Tibial artery (tissue), 4 donors: ENCODE measurements at regions of chr19 and their contacts with region 1.

Region 1: DNA sequence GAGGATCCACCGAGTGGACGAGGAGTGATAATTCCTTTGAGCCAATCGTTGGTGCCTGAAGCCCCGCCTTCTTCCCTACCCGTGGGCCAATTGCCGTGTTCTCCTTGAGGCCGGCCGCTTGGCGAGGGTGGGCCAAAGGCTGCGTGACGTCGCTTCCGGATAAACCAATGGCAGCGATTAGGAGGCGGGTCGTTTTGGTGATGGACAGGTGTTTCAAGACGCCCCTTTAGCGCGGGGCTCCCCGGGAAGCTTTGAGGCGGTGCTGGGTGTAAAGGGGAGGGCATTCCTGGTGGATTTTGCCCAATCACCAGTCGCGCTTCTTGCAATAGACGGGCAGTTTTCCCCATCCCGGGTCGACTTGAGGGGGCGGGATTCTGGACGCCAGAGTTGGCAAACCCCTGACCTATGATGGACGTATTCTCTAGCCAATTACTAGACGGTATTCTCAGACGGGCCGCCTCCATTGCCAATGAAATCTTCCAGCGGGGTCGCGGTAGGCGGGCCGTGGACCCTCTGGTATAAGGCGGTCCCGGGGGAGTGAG is 310 bp upstream of the PRMT1 start:
- DNase-seq: peak; percentile 100
- H3K4me3 ChIP-seq: peak overlapping the region; percentile 91 to 100
- H3K27ac ChIP-seq: peak overlapping the region; percentile 97 to 99
- H3K4me1 ChIP-seq: peaks cover 6 to 55% (median 44%) of the 10 kb centered on the region in 4 donors
- H3K27me3 ChIP-seq: no peaks in the 10 kb centered on the region
- CTCF ChIP-seq: no peak

Region 2: GRCh38 chr19:49497047-49497788 is 179.5 kb before region 1 on chr19:
- intact Hi-C with region 1: loop called (anchors 10 kb)
- DNase-seq: peak in 1 of 2 donors; percentile 73
- H3K4me3 ChIP-seq: peak overlapping the region; percentile 80 to 87
- H3K27ac ChIP-seq: peak overlapping the region; percentile 89 to 92
- H3K4me1 ChIP-seq: peaks cover 0 to 47% (median 32%) of the 10 kb centered on the region in 4 donors
- H3K27me3 ChIP-seq: no peaks in the 10 kb centered on the region
- CTCF ChIP-seq: no peak

Region 3: DNA sequence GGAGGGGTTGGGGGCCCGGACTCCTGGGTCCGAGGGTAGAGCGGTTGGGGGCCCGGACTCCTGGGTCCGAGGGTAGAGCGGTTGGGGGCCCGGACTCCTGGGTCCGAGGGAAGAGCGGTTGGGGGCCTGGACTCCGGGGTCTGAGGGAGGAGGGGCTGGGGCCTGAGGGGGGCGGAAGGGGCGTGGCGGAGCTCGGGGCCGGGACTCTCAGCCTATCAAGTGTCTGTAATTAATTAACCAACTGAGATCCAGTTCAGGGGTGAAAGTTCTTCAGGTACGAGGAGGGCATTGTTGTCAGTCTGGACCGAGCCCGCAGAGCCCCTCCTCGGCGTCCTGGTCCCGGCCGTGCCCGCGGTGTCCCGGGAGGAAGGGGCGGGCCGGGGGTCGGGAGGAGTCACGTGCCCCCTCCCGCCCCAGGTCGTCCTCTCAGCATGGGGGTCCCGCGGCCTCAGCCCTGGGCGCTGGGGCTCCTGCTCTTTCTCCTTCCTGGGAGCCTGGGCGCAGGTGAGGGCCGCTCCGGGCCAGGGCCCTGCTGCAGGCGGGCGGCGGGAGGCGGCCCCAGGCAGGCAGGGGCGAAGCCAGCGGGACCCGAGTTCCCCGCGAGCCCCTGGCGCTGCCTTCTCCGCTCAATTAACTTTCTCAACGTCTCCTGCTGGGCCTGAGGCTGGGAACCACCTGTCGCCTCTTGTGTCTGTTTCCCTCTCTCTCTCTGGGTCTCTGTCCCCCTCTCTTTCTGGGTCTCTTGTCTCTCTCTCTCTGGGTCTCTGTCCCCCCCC is 163.6 kb before region 1 on chr19:
- intact Hi-C with region 1: loop called (anchors 5 kb)
- DNase-seq: no peak
- H3K4me3 ChIP-seq: peak overlapping the region; percentile 68 to 82
- H3K27ac ChIP-seq: peak overlapping the region; percentile 88 to 90
- H3K4me1 ChIP-seq: peaks cover 0 to 28% (median 19%) of the 10 kb centered on the region in 4 donors
- H3K27me3 ChIP-seq: no peaks in the 10 kb centered on the region
- CTCF ChIP-seq: no peak

Region 4: DNA sequence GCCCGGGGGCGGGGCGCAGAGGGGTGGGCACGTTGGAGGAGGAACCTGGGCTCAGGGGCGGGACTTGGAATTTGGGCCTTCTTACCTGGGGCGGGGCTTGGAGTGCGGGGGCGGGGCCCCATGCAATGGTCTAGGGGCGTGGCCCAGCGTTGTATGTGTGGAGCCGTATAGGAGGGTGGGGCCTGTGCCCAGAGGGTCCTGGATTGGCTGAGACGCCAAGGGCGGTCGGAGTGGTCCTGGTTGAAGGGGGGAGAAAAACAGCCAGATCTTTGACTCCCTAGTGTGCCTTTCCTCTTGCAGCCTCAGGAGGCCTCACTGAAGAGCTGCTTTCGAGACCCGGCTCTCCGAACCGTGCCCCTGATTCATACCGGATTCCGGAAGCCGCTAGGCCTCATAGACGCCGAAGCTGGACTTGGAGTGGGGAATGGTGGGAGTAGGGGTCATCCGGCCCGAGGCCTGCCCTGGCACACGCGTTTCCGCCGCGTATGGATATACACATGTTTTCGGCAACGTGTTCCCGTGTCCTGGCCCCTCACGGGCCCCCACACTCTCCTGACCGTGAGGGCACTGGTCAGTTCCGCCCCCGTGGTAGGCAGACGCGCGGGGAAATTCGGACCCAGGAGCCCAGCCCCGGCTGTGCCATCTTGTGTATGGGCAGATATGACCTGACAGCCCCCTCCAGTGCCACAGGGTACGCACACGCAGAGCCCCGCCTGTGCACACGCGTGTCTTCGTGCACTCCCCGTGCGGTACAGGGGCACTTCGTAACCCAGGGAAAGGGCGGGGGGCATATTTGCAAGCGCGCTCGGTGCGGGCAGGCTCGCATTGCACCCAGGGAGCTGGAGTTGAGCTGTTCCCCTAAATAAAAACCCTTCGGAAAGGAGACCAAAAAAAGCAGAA is 86.4 kb before region 1 on chr19:
- intact Hi-C with region 1: loop called (anchors 2 kb)
- DNase-seq: peak; percentile 94 to 96
- H3K4me3 ChIP-seq: peak overlapping the region; percentile 87 to 96
- H3K27ac ChIP-seq: peak overlapping the region; percentile 86 to 92
- H3K4me1 ChIP-seq: peaks cover 0 to 34% (median 15%) of the 10 kb centered on the region in 4 donors
- H3K27me3 ChIP-seq: no peaks in the 10 kb centered on the region
- CTCF ChIP-seq: no peak